Activated B cell treated with CpG ODN at 0.5 μM for 24 hours (primary cell): ENCODE measurements at regions of chr3 and their contacts with region 1.

Region 1: GRCh38 chr3:61894988-61895935 is 333.9 kb downstream of the PTPRG start:
- DNase-seq: no peak
- ATAC-seq: peak; percentile 87
- H3K4me3 Mint-ChIP-seq: no peak overlapping the region
- H3K27ac Mint-ChIP-seq: peak overlapping the region; percentile 65
- H3K4me1 Mint-ChIP-seq: peaks cover 9% of the 10 kb centered on the region
- H3K27me3 Mint-ChIP-seq: no peaks in the 10 kb centered on the region
- CTCF ChIP-seq: no peak

Region 2: DNA sequence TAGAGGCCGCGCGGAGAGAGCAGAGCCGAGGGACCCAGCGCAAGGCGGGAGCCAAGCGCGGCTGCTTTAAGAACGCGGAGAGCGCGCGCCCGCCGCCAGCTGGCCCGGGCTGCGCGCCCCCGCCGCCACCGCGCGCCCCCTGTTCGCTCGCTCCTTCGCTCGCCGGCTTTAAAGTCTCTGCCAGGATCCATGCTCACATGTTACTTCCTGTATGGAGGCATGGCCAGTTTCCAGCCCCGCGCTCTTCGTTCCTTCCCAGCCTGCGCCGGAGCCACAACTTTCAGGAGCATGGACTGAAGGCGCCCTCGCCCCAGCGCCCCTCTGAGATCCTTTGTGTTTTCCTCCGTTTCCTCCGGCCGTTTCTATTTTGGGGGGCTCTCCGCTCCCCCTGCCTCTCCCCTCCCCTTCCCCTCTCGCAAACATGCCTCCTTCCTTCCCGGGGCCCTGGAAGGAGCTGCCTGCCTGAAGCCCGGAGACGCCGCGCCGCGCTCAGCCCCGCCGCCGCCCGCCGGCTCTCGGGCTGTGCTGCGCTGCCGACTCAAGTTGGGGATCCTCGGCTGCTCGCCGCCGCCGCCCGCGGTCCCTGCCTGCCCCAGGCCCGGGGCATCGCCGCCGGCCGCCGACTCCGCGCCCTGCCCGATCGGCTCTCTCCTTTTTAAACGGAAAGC is 333.8 kb before region 1 on chr3 and contains the start of gene PTPRG:
- CTCF ChIA-PET with region 1: no interaction called
- POLR2A ChIA-PET with region 1: no interaction called
- intact Hi-C with region 1: loop called (anchors 5 kb)
- DNase-seq: no peak
- ATAC-seq: peak; percentile 47
- H3K4me3 Mint-ChIP-seq: peak within 1 kb of the TSS; percentile 82
- H3K27ac Mint-ChIP-seq: no peak within 1 kb of the TSS
- H3K4me1 Mint-ChIP-seq: peaks cover 22% of the 10 kb centered on the region
- H3K27me3 Mint-ChIP-seq: peaks cover 63% of the 10 kb centered on the region
- CTCF ChIP-seq: no peak
- total RNA-seq, gene PTPRG: 0.22 and 0.56 TPM in 2 replicates

Region 3: GRCh38 chr3:61877348-61878138 is 17.7 kb before region 1 on chr3:
- CTCF ChIA-PET with region 1: no interaction called
- POLR2A ChIA-PET with region 1: no interaction called
- intact Hi-C with region 1: no loop called
- DNase-seq: no peak
- ATAC-seq: no peak
- H3K4me3 Mint-ChIP-seq: no peak overlapping the region
- H3K27ac Mint-ChIP-seq: no peak overlapping the region
- H3K4me1 Mint-ChIP-seq: no peaks in the 10 kb centered on the region
- H3K27me3 Mint-ChIP-seq: no peaks in the 10 kb centered on the region
- CTCF ChIP-seq: no peak

Region 4: DNA sequence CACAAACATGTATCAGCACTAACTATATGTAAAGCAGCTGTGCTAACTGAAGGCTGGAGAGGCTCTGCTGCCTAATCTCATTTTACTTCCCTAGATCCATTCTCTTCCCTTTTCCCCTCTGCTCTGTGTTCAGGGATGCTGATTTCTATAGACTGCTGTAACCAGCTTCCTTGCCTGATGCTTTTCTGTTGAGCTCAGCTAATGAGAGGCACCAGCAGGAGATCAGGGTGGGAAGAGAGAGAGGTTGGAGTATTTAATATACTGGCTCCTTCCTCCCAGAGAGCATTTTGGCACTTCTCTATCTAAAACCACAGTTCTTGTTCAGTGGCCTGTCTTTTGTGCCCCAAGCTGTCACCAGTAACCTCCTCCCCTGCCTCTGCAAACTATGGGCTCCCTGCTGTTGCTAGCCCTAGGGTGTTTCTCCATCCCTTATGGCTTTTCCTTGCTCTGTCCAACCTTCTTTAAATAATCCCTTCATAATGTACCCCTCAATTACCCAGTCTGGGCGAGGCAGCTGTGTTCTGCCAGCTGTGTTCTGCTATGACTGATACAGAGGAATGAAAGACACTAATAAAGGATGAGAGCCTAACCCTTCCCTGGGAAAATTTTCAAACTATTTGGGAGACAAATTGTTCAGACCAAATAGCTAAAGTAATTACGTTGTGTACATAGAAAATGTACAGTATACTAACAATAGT is 910.5 kb after region 1 on chr3:
- CTCF ChIA-PET with region 1: no interaction called
- POLR2A ChIA-PET with region 1: no interaction called
- intact Hi-C with region 1: no loop called
- DNase-seq: no peak
- ATAC-seq: no peak
- H3K4me3 Mint-ChIP-seq: no peak overlapping the region
- H3K27ac Mint-ChIP-seq: no peak overlapping the region
- H3K4me1 Mint-ChIP-seq: no peaks in the 10 kb centered on the region
- H3K27me3 Mint-ChIP-seq: no peaks in the 10 kb centered on the region
- CTCF ChIP-seq: no peak